ENCODE measurements at regions of chr5 and their contacts with region 1.

Region 1: GRCh38 chr5:96614110-96614691 is 48.0 kb upstream of the CAST start:
- DNase-seq: peak; percentile 92
- H3K4me3 ChIP-seq: peak overlapping the region in 1 of 4 donors; percentile 2
- H3K27ac ChIP-seq: peak overlapping the region; percentile 14 to 60 (median 38)
- H3K4me1 ChIP-seq: peaks cover 0 to 17% (median 13%) of the 10 kb centered on the region in 4 donors
- H3K27me3 ChIP-seq: no peaks in the 10 kb centered on the region
- CTCF ChIP-seq: peak; percentile 53 to 60 (median 59)
- EP300 ChIP-seq: no peak
- POLR2A ChIP-seq: no peak

Region 2: GRCh38 chr5:96657087-96657665 is 43.0 kb after region 1 on chr5:
- intact Hi-C with region 1: loop called (anchors 5 kb)
- DNase-seq: no peak
- H3K4me3 ChIP-seq: no peak overlapping the region
- H3K27ac ChIP-seq: no peak overlapping the region
- H3K4me1 ChIP-seq: peaks cover 0 to 10% (median 8%) of the 10 kb centered on the region in 4 donors
- H3K27me3 ChIP-seq: no peaks in the 10 kb centered on the region
- CTCF ChIP-seq: no peak
- EP300 ChIP-seq: no peak
- POLR2A ChIP-seq: no peak

Region 3: DNA sequence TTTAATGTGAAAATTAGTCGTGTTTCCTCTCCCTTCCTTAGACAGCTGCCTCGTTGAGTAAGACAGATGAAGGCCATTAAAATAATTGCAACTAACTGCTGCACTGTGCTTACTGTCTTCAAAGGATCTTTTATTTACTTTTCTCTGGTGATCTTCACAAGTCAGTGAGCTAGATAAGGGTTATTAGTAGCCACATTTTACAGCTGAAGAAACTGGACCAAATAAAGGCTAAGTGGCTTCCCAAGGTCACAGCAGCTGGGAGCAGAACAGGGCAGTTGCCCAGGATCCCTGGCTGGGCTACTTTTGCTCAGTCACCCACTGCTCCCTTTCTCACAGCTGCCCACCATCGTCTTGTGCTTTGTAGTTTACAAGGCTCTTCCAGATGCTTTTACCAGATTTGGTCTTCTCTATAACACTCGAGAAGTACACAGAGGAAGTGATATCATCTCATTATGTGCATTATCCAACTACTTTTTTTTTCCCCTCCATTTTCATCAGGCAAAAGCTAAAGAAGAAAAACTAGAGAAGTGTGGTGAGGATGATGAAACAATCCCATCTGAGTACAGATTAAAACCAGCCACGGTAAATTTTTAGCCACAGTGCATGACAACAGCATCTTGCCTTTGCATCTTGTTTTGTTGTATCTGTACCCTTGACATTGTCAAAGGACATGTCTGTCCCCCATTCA is 131.8 kb after region 1 on chr5:
- intact Hi-C with region 1: loop called (anchors 5 kb)
- DNase-seq: no peak
- H3K4me3 ChIP-seq: no peak overlapping the region
- H3K27ac ChIP-seq: peak overlapping the region in 2 of 4 donors; percentile 24 to 39
- H3K4me1 ChIP-seq: peaks cover 19 to 55% (median 25%) of the 10 kb centered on the region in 4 donors
- H3K27me3 ChIP-seq: no peaks in the 10 kb centered on the region
- CTCF ChIP-seq: no peak
- EP300 ChIP-seq: no peak
- POLR2A ChIP-seq: no peak

Region 4: DNA sequence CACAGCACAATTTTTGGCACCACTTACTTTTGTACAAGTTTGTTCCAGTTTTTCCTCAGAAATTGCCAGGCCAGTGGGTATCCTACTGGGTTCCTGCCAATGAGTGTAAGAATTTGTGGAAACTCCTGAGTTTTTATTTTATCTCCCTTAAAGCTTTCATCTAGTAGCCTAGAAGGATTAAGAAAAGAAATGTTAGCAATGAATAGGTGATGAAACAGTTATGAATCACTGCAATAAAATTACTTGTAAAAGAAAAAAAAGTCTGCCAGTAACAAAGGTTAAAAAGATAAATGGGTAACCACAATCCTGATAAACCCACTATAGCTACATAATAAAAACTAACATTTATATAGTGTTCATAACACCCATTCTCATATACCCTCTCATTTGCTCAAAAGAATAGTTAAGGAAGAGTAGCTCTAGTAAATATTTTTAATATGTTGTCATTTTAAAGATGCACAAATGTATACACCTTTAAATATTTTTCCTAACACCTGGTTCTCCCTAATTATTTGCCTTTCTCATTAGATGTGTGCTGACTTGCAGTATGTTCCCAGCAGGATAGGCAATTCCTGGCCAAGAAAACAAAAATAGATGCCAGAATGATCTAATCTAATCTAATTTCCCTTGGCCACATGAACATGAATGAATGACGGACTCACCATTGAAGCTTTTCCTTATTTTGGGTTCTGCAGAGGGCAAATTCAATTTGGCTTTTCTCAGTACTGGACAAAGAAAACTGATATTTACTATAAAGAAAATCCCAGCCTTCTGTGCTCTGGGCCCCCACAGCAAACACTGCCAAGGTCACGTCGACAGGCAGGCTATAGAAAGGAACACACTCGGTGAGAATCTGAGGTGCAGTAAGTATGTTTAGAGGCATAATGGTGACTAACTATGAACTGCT is 167.1 kb after region 1 on chr5:
- intact Hi-C with region 1: no loop called
- DNase-seq: no peak
- H3K4me3 ChIP-seq: no peak overlapping the region
- H3K27ac ChIP-seq: peak overlapping the region; percentile 32 to 72 (median 53)
- H3K4me1 ChIP-seq: peaks cover 13 to 47% (median 40%) of the 10 kb centered on the region in 4 donors
- H3K27me3 ChIP-seq: no peaks in the 10 kb centered on the region
- CTCF ChIP-seq: no peak
- EP300 ChIP-seq: no peak
- POLR2A ChIP-seq: no peak

Measured in esophagus muscularis mucosa (tissue), 4 donors.